Activated T-helper 1 cell treated with anti-CD3 and anti-CD28 coated beads, Interleukin-12 subunit alpha, Interleukin-12 subunit beta, Interleukin-2, Interleukin-4 antibody, amounts not matched to agents 30 ng/mL and 10 ng/mL and 1 ng/mL, durations not matched to agents 14 hours and 24 hours and 36 hours (primary cell): ENCODE measurements at regions of chr5 and their contacts with region 1.

Region 1: GRCh38 chr5:147822686-147823491 is 8.6 kb downstream of the SPINK1 start:
- DNase-seq: peak; percentile 16
- H3K4me3 Mint-ChIP-seq: no peak overlapping the region
- H3K27ac Mint-ChIP-seq: no peak overlapping the region
- H3K4me1 Mint-ChIP-seq: no peaks in the 10 kb centered on the region
- H3K27me3 Mint-ChIP-seq: peaks cover 11% of the 10 kb centered on the region

Region 2: DNA sequence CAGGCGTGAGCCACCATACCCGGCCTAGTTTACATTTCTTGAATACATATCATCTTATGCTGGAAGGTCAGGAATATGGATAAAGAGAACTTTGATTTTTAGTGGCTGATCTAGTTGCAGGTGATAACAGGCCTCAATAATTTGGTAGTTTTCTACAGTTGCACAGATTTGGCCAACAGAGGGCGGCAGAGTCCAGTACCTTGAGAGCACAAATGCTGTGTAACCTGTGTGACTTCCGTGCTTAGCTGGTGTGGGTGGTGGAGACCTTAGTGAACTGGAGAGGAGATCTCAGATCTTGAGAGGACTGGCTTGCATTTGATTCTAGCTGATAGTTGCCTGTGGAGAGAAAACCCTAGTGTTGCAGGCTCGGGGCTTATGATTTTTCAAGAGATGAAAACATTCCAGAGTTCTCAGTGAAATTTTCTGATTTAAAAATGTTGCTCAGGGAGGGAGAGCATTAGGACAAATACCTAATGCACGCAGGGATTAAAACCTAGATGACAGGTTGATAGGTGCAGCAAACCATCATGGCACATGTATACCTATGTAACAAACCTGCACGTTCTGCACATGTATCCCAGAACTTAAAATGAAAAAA is 1289.5 kb before region 1 on chr5:
- intact Hi-C with region 1: loop called (anchors 10 kb)
- DNase-seq: peak; percentile 58
- H3K4me3 Mint-ChIP-seq: no peak overlapping the region
- H3K27ac Mint-ChIP-seq: no peak overlapping the region
- H3K4me1 Mint-ChIP-seq: peaks cover 16% of the 10 kb centered on the region
- H3K27me3 Mint-ChIP-seq: peaks cover 3% of the 10 kb centered on the region

Region 3: GRCh38 chr5:147453875-147454814 is 368.7 kb before region 1 on chr5:
- intact Hi-C with region 1: loop called (anchors 1 kb)
- DNase-seq: peak; percentile 55
- H3K4me3 Mint-ChIP-seq: peak overlapping the region; percentile 80
- H3K27ac Mint-ChIP-seq: no peak overlapping the region
- H3K4me1 Mint-ChIP-seq: peaks cover 22% of the 10 kb centered on the region
- H3K27me3 Mint-ChIP-seq: peaks cover 53% of the 10 kb centered on the region

Region 4: GRCh38 chr5:147628058-147628895 is 194.6 kb before region 1 on chr5:
- intact Hi-C with region 1: loop called (anchors 1 kb)
- DNase-seq: peak; percentile 38
- H3K4me3 Mint-ChIP-seq: no peak overlapping the region
- H3K27ac Mint-ChIP-seq: no peak overlapping the region
- H3K4me1 Mint-ChIP-seq: no peaks in the 10 kb centered on the region
- H3K27me3 Mint-ChIP-seq: peaks cover 1% of the 10 kb centered on the region